ENCODE measurements at regions of chr3 and their contacts with region 1.

Region 1: DNA sequence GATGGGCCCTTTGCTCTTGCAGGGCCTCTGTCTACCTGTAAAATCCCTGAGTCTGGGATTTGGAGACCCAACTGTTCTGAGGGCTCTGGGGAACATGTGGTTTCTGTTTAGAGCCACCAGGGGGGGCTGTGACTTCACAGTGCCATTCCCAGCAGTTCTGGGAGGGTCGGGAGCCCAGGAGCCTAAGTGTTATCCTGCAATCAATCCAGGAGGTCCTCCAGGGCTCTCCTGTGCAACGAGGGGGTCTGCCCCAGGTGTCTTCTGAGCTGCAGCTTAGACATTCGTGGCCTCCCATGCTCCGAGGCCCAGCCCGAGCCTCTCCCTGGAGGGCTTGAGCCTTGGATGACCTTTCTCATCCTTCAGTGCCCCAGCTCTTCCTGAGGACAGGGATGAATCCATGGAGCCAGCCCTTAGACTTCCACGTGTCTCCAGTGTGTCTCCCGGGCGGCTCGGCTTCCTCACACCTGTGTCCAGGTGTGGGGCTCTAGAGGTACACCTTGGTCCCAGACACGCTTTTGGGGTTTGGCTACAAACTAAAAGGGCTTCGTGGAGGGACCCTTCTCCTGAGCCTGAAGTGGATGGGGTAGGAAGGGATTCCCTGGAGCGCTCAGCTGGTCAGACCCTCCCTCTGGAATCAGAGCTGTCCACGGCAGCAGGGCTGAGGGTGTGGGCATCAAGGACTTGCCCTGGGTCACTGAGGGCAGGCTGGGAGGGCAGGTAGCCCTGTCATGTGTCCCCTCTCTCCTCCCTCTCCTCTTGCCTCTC is 20.3 kb upstream of the ABTB1 start:
- DNase-seq: peak in 35 of 42 donors; percentile 27 to 84 (median 60)

Region 2: GRCh38 chr3:127612966-127613365 is 39.4 kb before region 1 on chr3:
- intact Hi-C with region 1: no loop called
- DNase-seq: no peak

Region 3: GRCh38 chr3:127889461-127889863 is 237.0 kb after region 1 on chr3:
- intact Hi-C with region 1: no loop called
- DNase-seq: peak in 1 of 42 donors; percentile 50

Region 4: DNA sequence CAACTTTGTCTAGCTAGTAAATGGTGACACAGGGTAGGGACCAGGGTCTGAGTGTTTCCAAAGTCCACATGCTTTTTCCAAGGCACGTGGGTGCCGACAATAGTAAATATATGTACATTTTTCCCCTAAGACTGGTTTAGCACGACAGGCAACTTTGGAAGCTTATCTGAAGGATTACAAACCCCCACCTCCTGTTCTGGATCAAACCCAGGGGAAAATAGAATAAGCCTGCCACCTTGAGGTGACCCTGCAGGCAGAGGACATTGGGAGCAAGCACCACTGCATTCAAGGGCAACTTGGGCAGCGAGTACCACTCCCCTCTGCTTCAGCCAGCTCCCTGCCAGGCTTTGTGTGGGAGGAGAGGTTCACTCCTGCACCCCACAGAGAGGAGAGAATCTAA is 307.4 kb after region 1 on chr3:
- intact Hi-C with region 1: loop called (anchors 5 kb)
- DNase-seq: peak in 25 of 42 donors; percentile 10 to 66 (median 31)

Measured in head of caudate nucleus (tissue), 42 donors.